AG04450 (cell line): ENCODE measurements at regions of chr10 and their contacts with region 1.

Region 1: DNA sequence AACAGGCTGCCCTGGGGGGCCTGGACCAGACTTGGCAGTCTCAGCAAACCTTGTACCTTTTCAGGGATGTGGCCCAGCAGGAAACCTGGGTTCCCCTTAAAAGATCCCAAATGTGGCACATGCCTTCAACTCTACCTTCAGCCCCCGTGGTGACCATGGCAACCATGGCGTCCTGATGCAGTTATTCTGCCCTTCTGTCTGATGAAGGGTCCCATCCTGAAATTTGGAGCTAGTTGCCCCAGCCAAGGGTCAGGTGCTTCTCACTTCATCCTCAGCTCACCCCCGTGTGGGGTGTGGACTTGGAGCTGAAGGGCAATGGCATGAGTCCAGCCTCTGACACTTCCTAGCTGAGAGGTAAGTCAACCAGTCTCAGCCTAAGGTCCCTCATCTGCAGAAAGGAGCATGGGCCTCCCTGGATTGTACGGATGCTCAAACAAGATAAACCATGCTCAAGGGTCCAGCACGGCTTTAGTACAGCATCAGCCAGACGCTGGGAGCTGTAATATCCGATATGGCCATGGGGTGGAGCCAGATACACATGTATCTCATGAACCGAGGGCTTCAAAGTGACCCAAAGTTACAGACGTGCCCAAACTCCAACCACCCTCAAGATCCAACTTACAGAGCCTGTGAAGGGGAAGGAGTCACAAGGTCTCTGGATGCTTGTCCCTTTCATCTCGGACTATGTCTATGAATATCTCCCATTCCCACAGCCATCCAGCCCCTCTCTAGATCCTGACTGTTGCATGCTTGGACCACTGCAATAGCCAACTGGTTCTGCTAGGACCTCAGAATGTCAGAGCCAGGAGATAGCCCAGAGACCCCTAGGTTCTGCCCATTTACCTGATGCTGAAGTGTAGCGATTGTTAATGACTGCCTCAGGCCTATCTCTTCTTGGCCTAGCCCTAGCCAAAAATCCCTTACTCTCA is 142.5 kb downstream of the SH3PXD2A start:
- DNase-seq: peak; percentile 58
- H3K4me3 ChIP-seq: no peak overlapping the region
- H3K27ac ChIP-seq: no peak overlapping the region
- H3K27me3 ChIP-seq: no peaks in the 10 kb centered on the region
- CTCF ChIP-seq: peak; percentile 85

Region 2: DNA sequence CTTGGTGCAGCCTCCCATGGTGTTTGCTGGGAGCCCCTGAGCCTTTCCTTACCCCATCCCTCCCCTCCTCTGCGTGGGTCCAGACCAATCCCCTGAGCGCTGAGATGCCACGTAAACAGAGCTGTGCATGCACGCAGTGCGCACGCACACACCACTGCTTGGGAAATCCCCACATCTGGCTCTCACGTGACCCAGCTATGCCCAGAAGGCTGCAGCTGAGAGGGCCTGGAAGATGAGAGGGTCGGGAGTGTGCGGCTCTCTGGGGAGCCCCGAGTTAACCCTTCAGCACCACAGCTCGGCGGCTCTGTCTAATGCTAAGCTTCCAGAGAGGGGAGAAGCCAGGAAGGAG is 34.7 kb before region 1 on chr10:
- CTCF ChIA-PET with region 1: no interaction called
- POLR2A ChIA-PET with region 1: no interaction called
- DNase-seq: peak; percentile 99
- H3K4me3 ChIP-seq: peak overlapping the region; percentile 75
- H3K27ac ChIP-seq: peak overlapping the region; percentile 100
- H3K27me3 ChIP-seq: no peaks in the 10 kb centered on the region
- CTCF ChIP-seq: no peak

Region 3: DNA sequence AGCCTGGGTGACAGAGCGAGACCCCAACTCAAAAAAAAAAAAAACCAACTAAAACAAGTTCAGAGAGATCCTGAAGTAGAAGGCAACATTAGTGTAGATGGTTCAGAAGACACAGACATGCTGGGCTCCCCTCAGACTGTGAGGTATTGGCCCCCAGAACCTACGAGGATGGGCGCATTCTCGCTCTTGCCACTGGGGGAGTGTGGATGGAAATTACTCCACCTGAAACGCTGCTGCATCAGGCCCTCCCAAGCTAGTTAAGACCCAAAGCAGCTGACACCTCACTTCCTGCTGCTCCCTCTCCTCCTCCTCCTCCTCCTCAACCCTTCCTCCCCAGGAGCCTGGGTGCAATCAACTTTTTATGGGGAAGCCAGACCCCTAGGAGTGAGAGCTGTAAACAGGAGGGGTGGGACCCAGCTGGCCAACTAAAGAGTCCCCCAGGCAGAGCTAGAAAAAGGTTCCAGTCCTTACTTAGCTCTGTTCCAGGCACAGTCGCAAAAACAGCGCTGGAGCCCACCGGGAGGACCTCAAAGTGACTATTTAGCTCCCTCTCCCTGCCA is 135.2 kb after region 1 on chr10:
- CTCF ChIA-PET with region 1: interaction called, 70 read pairs
- POLR2A ChIA-PET with region 1: interaction called, 8 read pairs
- DNase-seq: no peak
- H3K4me3 ChIP-seq: no peak overlapping the region
- H3K27ac ChIP-seq: no peak overlapping the region
- H3K27me3 ChIP-seq: no peaks in the 10 kb centered on the region
- CTCF ChIP-seq: peak; percentile 47

Region 4: GRCh38 chr10:103859161-103860086 is 146.6 kb after region 1 on chr10:
- CTCF ChIA-PET with region 1: interaction called, 70 read pairs
- POLR2A ChIA-PET with region 1: interaction called, 6 read pairs
- DNase-seq: no peak
- H3K4me3 ChIP-seq: no peak overlapping the region
- H3K27ac ChIP-seq: no peak overlapping the region
- H3K27me3 ChIP-seq: no peaks in the 10 kb centered on the region
- CTCF ChIP-seq: peak; percentile 73

Region 5: DNA sequence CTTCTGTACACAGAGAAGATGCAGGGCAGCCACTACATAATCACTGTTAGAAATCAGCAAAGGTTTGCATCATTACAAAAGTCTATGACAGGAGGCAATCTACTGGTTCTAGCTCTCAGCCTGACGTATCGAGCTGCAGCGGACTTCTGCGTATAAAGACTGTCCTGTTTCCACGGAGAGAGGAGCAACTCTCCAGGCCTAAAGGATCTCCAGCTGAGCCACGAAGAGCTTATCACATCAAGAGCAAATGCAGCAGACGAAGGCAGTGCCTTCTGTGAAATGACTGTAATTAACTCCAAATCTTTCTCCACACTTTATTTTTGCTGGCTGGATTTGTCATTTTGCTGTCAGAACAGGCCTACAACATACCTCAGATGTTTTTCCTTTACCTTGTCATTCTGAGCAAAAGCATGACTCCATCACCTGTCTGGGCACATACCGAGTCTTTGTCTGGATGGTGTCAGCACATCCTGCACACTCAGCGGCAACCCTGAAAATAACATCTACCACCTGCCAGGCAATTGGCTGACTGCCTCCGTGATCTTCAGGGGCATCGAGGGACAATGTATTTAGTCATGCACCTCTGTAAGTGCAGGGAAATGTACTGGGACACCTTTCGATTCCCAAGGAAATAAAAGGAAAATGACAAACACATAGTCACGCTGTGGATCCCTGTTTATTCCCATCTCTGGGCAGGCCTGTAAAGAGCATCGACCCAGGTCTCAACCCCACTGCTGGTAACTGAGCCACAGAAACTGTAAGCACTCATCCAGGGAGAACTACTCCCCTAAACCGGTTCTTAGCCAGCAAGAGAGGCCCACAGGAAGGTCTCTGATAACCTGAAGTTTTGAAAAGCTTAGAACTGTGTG is 168.8 kb after region 1 on chr10:
- CTCF ChIA-PET with region 1: interaction called, 186 read pairs
- POLR2A ChIA-PET with region 1: no interaction called
- DNase-seq: no peak
- H3K4me3 ChIP-seq: no peak overlapping the region
- H3K27ac ChIP-seq: no peak overlapping the region
- H3K27me3 ChIP-seq: no peaks in the 10 kb centered on the region
- CTCF ChIP-seq: no peak

Region 6: DNA sequence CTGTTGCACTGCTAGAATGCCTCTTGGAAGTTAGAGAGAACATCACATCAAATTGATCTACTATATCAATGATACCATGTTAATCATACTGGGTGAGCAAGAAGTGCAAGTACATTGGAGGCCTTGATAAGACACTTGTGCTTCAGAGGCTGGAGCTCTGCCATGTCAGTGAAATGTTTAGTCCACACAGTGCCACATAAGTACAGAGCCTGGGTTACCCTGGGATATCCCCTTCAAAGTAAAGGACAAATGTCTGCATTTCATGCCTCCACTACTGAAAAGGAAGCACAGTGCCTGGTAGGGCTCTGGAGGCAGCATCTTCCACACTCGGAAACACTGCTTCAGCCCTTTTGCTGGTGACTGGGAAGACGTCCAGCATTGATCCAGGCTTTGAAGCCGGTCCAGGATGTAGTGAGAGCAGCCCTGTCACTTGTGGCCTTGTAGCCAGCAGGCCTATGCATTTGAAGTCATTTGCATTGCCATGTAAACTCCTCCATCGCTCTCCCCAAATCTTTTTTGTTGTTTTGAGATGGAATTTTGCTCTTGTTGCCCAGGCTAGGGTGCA is 220.8 kb after region 1 on chr10:
- CTCF ChIA-PET with region 1: no interaction called
- POLR2A ChIA-PET with region 1: no interaction called
- DNase-seq: no peak
- H3K4me3 ChIP-seq: no peak overlapping the region
- H3K27ac ChIP-seq: no peak overlapping the region
- H3K27me3 ChIP-seq: peaks cover 14% of the 10 kb centered on the region
- CTCF ChIP-seq: no peak